OCI-LY7 (cell line): ENCODE measurements at regions of chr12 and their contacts with region 1.

Region 1: GRCh38 chr12:69157023-69157655 is 82.2 kb upstream of the CPSF6 start:
- DNase-seq: peak; percentile 91
- H3K4me3 ChIP-seq: peak overlapping the region; percentile 21
- H3K27ac ChIP-seq: no peak overlapping the region
- H3K4me1 ChIP-seq: peaks cover 14% of the 10 kb centered on the region
- CTCF ChIP-seq: peak; percentile 97

Region 2: DNA sequence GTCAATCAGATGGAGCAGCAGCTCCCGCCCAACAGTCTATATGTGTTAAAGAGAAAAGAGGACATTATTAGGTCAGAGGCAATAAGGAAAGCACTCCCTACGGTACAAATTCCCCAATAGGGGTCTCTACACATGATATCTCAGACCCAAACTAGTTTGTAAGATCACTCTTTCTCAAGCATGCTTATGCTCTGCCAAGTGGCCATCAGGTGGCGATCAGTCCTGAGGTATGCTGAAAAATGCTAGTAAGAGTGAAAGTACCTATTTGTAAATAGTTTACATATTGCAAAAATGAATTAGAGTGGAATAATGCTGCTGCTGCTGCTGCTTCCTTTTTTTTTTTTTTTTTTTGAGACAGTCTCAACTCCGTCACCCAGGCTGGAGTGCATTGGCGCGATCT is 285.2 kb before region 1 on chr12:
- CTCF ChIA-PET with region 1: no interaction called
- POLR2A ChIA-PET with region 1: no interaction called
- intact Hi-C with region 1: loop called (anchors 5 kb)
- DNase-seq: peak; percentile 67
- H3K4me3 ChIP-seq: no peak overlapping the region
- H3K27ac ChIP-seq: no peak overlapping the region
- H3K4me1 ChIP-seq: peaks cover 23% of the 10 kb centered on the region
- CTCF ChIP-seq: peak; percentile 84

Region 3: DNA sequence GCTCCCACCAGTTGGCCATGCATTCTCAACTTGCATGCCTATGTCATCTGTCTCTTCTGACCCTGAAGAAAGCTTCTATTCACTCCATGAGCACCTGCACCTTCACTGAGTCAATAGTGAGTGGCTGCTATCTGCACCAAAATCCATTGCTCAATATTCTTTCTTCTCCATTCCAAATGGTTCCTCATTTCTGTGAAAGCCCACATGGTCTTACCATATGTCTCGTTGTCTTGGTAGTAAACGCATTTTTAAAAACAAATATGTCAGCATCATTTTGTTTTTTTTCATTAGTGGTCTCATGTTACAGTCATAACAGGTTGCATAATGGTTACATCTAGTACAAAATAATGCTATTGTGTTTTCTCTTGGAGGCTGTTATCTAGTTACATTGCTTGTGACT is 117.2 kb before region 1 on chr12:
- CTCF ChIA-PET with region 1: no interaction called
- POLR2A ChIA-PET with region 1: no interaction called
- intact Hi-C with region 1: no loop called
- DNase-seq: no peak
- H3K4me3 ChIP-seq: no peak overlapping the region
- H3K27ac ChIP-seq: no peak overlapping the region
- H3K4me1 ChIP-seq: no peaks in the 10 kb centered on the region
- CTCF ChIP-seq: no peak

Region 4: GRCh38 chr12:69214169-69214568 is 57.0 kb after region 1 on chr12:
- CTCF ChIA-PET with region 1: no interaction called
- POLR2A ChIA-PET with region 1: no interaction called
- intact Hi-C with region 1: no loop called
- DNase-seq: no peak
- H3K4me3 ChIP-seq: no peak overlapping the region
- H3K27ac ChIP-seq: no peak overlapping the region
- H3K4me1 ChIP-seq: no peaks in the 10 kb centered on the region
- CTCF ChIP-seq: no peak

Region 5: DNA sequence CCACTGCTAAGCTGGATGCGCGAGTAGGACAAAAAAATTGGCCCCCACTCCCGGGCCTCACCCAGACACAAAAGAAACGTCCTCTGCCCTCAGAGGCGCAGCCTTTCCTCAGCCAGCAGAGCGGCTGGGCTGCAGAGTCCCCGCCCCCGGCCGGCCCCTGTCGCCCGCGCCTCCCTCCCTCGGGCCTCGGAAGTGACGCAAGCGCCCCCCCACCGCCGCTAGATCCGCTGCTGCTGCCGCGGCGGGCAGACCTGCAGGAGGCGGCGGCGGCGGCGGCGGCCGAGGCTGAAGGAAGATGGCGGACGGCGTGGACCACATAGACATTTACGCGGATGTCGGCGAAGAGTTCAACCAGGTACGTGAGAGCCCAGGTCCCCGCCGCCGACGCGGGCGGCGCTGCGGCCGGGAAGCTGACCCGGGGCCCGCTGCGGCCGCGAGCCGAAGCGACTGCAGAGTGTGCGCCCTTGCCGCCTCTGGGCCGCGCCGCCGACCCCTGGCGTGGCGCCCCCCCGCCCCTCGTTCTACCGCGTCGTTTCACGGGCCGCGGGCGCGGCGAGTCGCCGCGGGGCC is 82.3 kb after region 1 on chr12 and contains the start of gene CPSF6:
- CTCF ChIA-PET with region 1: no interaction called
- POLR2A ChIA-PET with region 1: no interaction called
- intact Hi-C with region 1: loop called (anchors 1 kb)
- DNase-seq: peak; percentile 96
- H3K4me3 ChIP-seq: peak within 1 kb of the TSS; percentile 81
- H3K27ac ChIP-seq: peak within 1 kb of the TSS; percentile 74
- H3K4me1 ChIP-seq: peaks cover 44% of the 10 kb centered on the region
- CTCF ChIP-seq: no peak
- total RNA-seq, gene CPSF6: 90.4 and 207 TPM in 2 replicates

Region 6: GRCh38 chr12:69254046-69254445 is 96.9 kb after region 1 on chr12:
- CTCF ChIA-PET with region 1: interaction called, 3 read pairs
- POLR2A ChIA-PET with region 1: interaction called, 4 read pairs
- intact Hi-C with region 1: loop called (anchors 2 kb)
- DNase-seq: peak; percentile 47
- H3K4me3 ChIP-seq: no peak overlapping the region
- H3K27ac ChIP-seq: no peak overlapping the region
- H3K4me1 ChIP-seq: peaks cover 16% of the 10 kb centered on the region
- CTCF ChIP-seq: peak; percentile 88

Region 7: GRCh38 chr12:69290545-69291277 is 133.6 kb after region 1 on chr12:
- CTCF ChIA-PET with region 1: no interaction called
- POLR2A ChIA-PET with region 1: no interaction called
- intact Hi-C with region 1: loop called (anchors 1 kb)
- DNase-seq: peak; percentile 87
- H3K4me3 ChIP-seq: no peak overlapping the region
- H3K27ac ChIP-seq: no peak overlapping the region
- H3K4me1 ChIP-seq: no peaks in the 10 kb centered on the region
- CTCF ChIP-seq: peak; percentile 99

Region 8: DNA sequence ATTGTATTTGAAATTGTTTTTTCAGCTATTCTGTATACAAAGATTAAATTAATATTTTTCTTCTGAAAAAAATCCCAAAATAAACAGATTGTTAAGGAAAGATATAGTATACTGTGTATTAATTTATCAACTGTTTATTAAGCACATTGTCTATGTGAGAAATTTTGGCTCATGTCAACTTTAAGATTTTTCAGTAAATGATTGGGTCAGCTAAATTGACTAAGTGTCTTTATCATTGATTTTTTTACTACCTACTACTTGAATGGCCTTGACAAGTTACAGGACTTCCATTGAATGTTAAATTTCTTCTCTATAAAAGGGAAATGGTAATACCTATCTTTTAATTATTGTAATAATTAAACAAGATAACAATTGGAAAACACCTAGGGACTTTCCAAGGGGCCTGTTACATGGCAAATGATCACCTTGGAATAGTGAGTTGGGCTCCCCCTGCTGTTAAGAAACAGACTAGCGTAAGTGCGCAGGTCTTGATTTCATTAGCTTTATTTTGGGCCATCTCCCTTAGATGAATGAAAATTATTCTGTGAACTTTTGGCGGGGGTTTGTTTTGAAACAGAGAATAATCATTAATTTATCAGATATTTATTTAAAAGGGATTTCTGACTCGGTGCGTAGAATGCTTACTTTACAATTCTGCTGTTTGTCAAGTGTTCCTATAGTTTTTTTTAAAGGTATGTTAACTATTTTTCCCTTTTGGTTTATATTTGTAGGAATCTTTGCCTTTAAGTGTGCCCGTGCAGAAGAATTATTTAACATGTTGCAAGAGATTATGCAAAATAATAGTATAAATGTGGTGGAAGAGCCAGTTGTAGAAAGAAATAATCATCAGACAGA is 413.6 kb after region 1 on chr12:
- CTCF ChIA-PET with region 1: no interaction called
- POLR2A ChIA-PET with region 1: no interaction called
- intact Hi-C with region 1: loop called (anchors 10 kb)
- DNase-seq: peak; percentile 75
- H3K4me3 ChIP-seq: no peak overlapping the region
- H3K27ac ChIP-seq: no peak overlapping the region
- H3K4me1 ChIP-seq: no peaks in the 10 kb centered on the region
- CTCF ChIP-seq: peak; percentile 96